AG04450 (cell line): ENCODE measurements at regions of chr17 and their contacts with region 1.

Region 1: GRCh38 chr17:77429919-77430752 is 289.4 kb downstream of the SEC14L1 start:
- DNase-seq: peak; percentile 96
- H3K4me3 ChIP-seq: no peak overlapping the region
- H3K27ac ChIP-seq: peak overlapping the region; percentile 96
- H3K27me3 ChIP-seq: no peaks in the 10 kb centered on the region
- CTCF ChIP-seq: peak; percentile 89

Region 2: GRCh38 chr17:77178563-77178962 is 251.6 kb before region 1 on chr17:
- CTCF ChIA-PET with region 1: no interaction called
- POLR2A ChIA-PET with region 1: no interaction called
- DNase-seq: no peak
- H3K4me3 ChIP-seq: no peak overlapping the region
- H3K27ac ChIP-seq: no peak overlapping the region
- H3K27me3 ChIP-seq: no peaks in the 10 kb centered on the region
- CTCF ChIP-seq: no peak

Region 3: GRCh38 chr17:77391668-77392375 is 38.3 kb before region 1 on chr17:
- CTCF ChIA-PET with region 1: interaction called, 10 read pairs
- POLR2A ChIA-PET with region 1: interaction called, 10 read pairs
- DNase-seq: peak; percentile 96
- H3K4me3 ChIP-seq: peak overlapping the region; percentile 21
- H3K27ac ChIP-seq: peak overlapping the region; percentile 94
- H3K27me3 ChIP-seq: no peaks in the 10 kb centered on the region
- CTCF ChIP-seq: no peak

Region 4: GRCh38 chr17:77444984-77445759 is 15.0 kb after region 1 on chr17:
- CTCF ChIA-PET with region 1: interaction called, 16 read pairs
- POLR2A ChIA-PET with region 1: interaction called, 12 read pairs
- DNase-seq: no peak
- H3K4me3 ChIP-seq: no peak overlapping the region
- H3K27ac ChIP-seq: peak overlapping the region; percentile 92
- H3K27me3 ChIP-seq: no peaks in the 10 kb centered on the region
- CTCF ChIP-seq: no peak

Region 5: DNA sequence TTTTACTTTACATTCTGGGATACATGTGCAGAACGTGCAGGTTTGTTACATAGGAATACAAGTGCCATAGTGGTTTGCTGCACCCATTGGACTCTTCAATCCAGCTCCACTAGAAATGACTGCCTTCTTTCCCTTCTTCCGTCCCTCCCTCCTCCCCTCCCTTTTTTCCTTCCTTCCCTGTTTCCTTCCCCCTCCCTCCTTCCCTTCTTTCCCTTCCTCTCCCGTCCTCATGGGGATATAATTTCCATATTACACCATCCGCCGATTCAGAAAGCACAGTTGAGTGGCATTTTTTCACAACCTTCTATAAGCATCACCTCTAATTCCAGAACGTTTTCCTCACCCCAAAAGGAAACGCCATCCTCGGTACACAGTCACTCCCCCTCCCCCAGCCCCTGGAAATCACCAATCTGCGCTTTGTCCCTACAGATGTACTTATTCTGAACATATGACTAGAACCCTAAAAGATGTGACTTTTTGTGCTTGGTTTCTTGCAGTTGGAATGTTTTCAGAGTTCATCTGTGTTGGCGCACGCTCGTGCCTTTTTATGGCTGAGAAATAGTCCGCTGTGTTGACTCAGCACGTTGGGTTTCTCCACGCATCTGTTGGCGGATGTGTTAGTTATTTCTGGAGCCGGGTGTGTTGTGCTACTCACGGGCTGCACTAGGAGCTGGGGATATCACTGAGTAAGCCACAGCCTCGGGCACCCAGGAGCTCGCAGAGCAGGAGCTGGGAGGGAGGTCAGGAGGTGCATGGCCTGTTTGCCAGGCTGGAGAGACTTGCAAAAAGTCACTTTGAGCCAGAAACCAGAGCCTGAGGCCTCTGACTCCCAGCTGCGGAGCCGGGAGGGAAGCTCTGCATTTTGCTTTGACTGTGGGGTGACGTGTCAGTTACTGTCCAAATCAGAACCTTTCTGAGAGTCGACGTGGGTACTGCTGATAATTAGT is 47.1 kb after region 1 on chr17:
- CTCF ChIA-PET with region 1: interaction called, 11 read pairs
- POLR2A ChIA-PET with region 1: interaction called, 4 read pairs
- DNase-seq: peak; percentile 91
- H3K4me3 ChIP-seq: peak overlapping the region; percentile 0; the same call in 1 of the 2 replicates
- H3K27ac ChIP-seq: peak overlapping the region; percentile 83
- H3K27me3 ChIP-seq: no peaks in the 10 kb centered on the region
- CTCF ChIP-seq: no peak; the same call in 1 of the 2 replicates

Region 6: GRCh38 chr17:77494664-77495435 is 64.7 kb after region 1 on chr17:
- CTCF ChIA-PET with region 1: interaction called, 19 read pairs
- POLR2A ChIA-PET with region 1: interaction called, 4 read pairs
- DNase-seq: peak; percentile 46
- H3K4me3 ChIP-seq: no peak overlapping the region
- H3K27ac ChIP-seq: peak overlapping the region; percentile 39
- H3K27me3 ChIP-seq: no peaks in the 10 kb centered on the region
- CTCF ChIP-seq: peak; percentile 97

Region 7: GRCh38 chr17:77535435-77535834 is 105.3 kb after region 1 on chr17:
- CTCF ChIA-PET with region 1: no interaction called
- POLR2A ChIA-PET with region 1: no interaction called
- DNase-seq: no peak
- H3K4me3 ChIP-seq: no peak overlapping the region
- H3K27ac ChIP-seq: no peak overlapping the region
- H3K27me3 ChIP-seq: peaks cover 12% of the 10 kb centered on the region
- CTCF ChIP-seq: no peak